Mammary epithelial cell (primary cell): ENCODE measurements at regions of chr5 and their contacts with region 1.

Region 1: GRCh38 chr5:10695055-10695649 is 65.9 kb downstream of the DAP start:
- DNase-seq: peak; percentile 60
- H3K4me3 ChIP-seq: no peak overlapping the region
- H3K27ac ChIP-seq: no peak overlapping the region
- H3K4me1 ChIP-seq: peaks cover 32% of the 10 kb centered on the region
- H3K27me3 ChIP-seq: no peaks in the 10 kb centered on the region
- CTCF ChIP-seq: peak; percentile 80 to 87

Region 2: DNA sequence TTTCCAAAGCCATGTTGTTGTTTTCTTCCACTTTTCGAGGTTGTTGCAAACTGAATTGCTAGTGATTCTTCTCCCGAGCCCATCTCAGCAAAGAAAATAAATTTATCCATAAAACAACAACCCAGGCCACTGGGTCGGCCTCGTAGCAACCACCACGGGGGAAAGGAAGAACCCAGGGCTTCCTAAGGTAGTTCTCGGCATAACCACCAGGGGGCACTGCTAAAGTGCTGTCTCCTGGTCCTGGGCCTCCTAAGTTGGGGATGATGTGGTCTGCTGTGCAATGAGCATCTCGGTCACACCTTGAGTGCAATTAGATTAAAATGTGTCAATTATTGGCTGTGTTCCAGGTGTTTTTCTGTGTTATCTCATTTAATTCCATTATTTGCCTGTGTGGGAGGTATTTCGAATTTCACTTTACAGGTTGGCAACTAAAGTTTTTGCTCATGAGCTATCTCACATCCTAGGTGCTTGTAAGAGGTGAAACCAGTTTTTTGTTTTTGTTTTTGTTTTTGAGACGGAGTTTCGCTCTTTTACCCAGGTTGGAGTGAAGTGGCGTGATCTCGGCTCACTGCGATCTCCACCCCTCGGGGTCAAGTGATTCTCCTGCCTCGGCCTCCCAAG is 168.7 kb after region 1 on chr5:
- CTCF ChIA-PET with region 1: no interaction called
- dilution Hi-C with region 1: no loop called
- in situ Hi-C with region 1: no loop called
- intact Hi-C with region 1: loop called (anchors 5 kb)
- DNase-seq: peak; percentile 17
- H3K4me3 ChIP-seq: no peak overlapping the region
- H3K27ac ChIP-seq: no peak overlapping the region
- H3K4me1 ChIP-seq: no peaks in the 10 kb centered on the region
- H3K27me3 ChIP-seq: no peaks in the 10 kb centered on the region
- CTCF ChIP-seq: peak; percentile 80 to 87

Region 3: DNA sequence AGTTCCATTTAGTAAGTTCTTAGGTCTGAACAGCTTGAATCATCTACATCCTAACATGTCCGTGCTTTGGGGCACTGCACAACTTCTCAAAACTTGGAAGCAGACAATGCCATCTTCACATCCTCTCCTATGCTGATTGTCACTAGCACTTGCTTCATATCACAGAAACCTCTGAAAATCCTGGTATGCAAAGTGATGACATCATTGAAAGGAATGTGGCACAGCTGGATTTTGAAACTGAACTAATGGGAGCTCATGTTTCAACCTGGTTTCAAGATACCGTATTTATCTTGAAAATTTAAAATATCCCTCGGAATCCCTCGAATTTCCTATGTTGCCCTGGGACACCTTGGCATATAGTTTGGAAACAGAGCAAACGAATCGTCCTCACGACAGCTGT is 556.1 kb after region 1 on chr5:
- CTCF ChIA-PET with region 1: no interaction called
- dilution Hi-C with region 1: no loop called
- in situ Hi-C with region 1: no loop called
- intact Hi-C with region 1: loop called (anchors 5 kb)
- DNase-seq: peak; percentile 75
- H3K4me3 ChIP-seq: no peak overlapping the region
- H3K27ac ChIP-seq: no peak overlapping the region
- H3K4me1 ChIP-seq: peaks cover 10% of the 10 kb centered on the region
- H3K27me3 ChIP-seq: no peaks in the 10 kb centered on the region
- CTCF ChIP-seq: no peak

Region 4: DNA sequence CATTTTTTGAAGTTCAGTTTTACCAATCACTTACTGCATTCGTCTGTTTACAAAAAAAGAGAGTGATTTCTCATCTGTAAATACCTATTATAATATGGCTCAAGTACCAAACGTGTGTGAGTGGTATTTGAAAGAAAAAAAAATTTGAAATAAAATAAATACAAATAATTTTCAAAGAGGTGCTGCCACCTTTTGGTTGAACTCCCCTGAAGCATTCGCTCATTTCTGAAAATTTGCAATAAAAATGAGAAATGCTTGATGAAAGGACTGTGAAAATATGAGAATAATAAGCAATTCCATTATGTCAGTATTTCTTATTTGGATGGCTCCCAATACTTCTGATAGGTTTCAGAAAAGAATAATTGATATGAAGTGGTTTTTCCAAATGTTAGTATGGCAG is 799.2 kb after region 1 on chr5:
- CTCF ChIA-PET with region 1: no interaction called
- dilution Hi-C with region 1: no loop called
- in situ Hi-C with region 1: no loop called
- intact Hi-C with region 1: loop called (anchors 10 kb)
- DNase-seq: no peak
- H3K4me3 ChIP-seq: no peak overlapping the region
- H3K27ac ChIP-seq: no peak overlapping the region
- H3K4me1 ChIP-seq: no peaks in the 10 kb centered on the region
- H3K27me3 ChIP-seq: no peaks in the 10 kb centered on the region
- CTCF ChIP-seq: peak in 1 of 2 donors; percentile 26